Esophagus muscularis mucosa (tissue), 4 donors: ENCODE measurements at regions of chr4 and their contacts with region 1.

Region 1: DNA sequence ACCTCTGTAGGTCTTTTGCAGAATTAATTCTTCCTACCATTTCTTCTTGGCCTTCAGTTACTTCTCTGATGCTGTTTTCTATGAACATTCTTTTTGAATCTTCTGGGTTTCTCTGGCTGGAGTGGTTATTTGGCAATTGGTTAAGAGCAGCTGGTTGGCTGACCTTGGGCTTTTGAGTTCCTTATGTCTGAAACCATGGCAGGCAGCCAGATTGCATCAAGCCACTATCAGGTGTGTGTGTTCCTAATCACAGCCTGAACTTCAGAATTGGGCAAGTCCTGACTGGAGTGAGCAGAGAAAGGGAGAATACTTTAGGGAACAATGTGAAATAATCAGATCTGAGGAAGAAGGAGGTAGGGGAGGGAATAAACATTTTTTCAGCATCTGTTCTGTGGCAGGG is 90.2 kb downstream of the ARHGAP10 start:
- DNase-seq: peak; percentile 95
- H3K4me3 ChIP-seq: no peak overlapping the region
- H3K27ac ChIP-seq: peak overlapping the region; percentile 71 to 93 (median 88)
- H3K4me1 ChIP-seq: peaks cover 58 to 99% (median 87%) of the 10 kb centered on the region in 4 donors
- H3K27me3 ChIP-seq: no peaks in the 10 kb centered on the region
- CTCF ChIP-seq: no peak
- EP300 ChIP-seq: no peak
- POLR2A ChIP-seq: no peak

Region 2: DNA sequence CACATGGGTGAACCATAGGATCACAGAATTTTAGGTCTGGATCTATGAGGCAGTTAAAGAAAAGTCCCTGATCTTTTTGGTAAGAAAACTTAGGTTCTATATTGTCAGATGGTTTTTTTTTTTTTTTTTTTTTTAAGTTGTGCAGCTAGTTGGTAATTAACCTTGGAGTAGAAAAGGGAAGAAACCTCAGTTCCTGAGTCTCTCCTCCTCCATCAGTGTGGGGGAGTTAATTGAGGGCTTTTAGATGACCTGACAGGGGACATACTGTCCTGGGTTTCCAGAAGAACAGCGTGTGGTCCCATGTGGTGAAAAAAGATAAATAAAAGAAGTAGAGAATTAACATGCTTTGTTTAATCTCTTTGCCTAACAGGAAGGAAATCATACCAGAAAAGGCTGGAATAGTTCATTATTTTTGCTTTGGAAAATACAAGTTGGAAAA is 33.5 kb after region 1 on chr4:
- intact Hi-C with region 1: loop called (anchors 5 kb)
- DNase-seq: no peak
- H3K4me3 ChIP-seq: no peak overlapping the region
- H3K27ac ChIP-seq: peak overlapping the region; percentile 77 to 81 (median 79)
- H3K4me1 ChIP-seq: peaks cover 26 to 94% (median 68%) of the 10 kb centered on the region in 4 donors
- H3K27me3 ChIP-seq: no peaks in the 10 kb centered on the region
- CTCF ChIP-seq: no peak
- EP300 ChIP-seq: peak; percentile 95
- POLR2A ChIP-seq: no peak